Heart right ventricle (tissue), 16 donors: ENCODE measurements at regions of chr19 and their contacts with region 1.

Region 1: GRCh38 chr19:3163230-3163886 is 15.2 kb upstream of the S1PR4 start:
- DNase-seq: peak; percentile 54 to 69
- ATAC-seq: peak; percentile 83 to 90 (median 88)
- H3K4me3 ChIP-seq: no peak overlapping the region
- H3K27ac ChIP-seq: peak overlapping the region in 1 of 10 donors; percentile 87
- H3K4me1 ChIP-seq: peaks cover 0 to 46% (median 7%) of the 10 kb centered on the region in 9 donors
- H3K27me3 ChIP-seq: no peaks in the 10 kb centered on the region
- CTCF ChIP-seq: peak; percentile 34 to 98 (median 95)

Region 2: GRCh38 chr19:2887391-2887914 is 275.9 kb before region 1 on chr19:
- intact Hi-C with region 1: loop called in 5 of 10 experiments (anchors 5 to 10 kb)
- DNase-seq: no peak
- ATAC-seq: peak; percentile 34 to 78 (median 71)
- H3K4me3 ChIP-seq: no peak overlapping the region
- H3K27ac ChIP-seq: peak overlapping the region in 1 of 10 donors; percentile 12
- H3K4me1 ChIP-seq: peaks cover 0 to 10% (median 4%) of the 10 kb centered on the region in 9 donors
- H3K27me3 ChIP-seq: peaks cover 0 to 3% (median 0%) of the 10 kb centered on the region in 7 donors
- CTCF ChIP-seq: peak; percentile 50 to 76 (median 70)

Region 3: GRCh38 chr19:2950286-2951124 is 212.9 kb before region 1 on chr19:
- intact Hi-C with region 1: loop called in 5 of 10 experiments (anchors 1 to 5 kb)
- DNase-seq: peak; percentile 100
- ATAC-seq: peak; percentile 94 to 98 (median 96)
- H3K4me3 ChIP-seq: peak overlapping the region; percentile 68 to 97 (median 80)
- H3K27ac ChIP-seq: peak overlapping the region; percentile 90 to 99 (median 95)
- H3K4me1 ChIP-seq: peaks cover 7 to 35% (median 19%) of the 10 kb centered on the region in 9 donors
- H3K27me3 ChIP-seq: no peaks in the 10 kb centered on the region
- CTCF ChIP-seq: no peak

Region 4: DNA sequence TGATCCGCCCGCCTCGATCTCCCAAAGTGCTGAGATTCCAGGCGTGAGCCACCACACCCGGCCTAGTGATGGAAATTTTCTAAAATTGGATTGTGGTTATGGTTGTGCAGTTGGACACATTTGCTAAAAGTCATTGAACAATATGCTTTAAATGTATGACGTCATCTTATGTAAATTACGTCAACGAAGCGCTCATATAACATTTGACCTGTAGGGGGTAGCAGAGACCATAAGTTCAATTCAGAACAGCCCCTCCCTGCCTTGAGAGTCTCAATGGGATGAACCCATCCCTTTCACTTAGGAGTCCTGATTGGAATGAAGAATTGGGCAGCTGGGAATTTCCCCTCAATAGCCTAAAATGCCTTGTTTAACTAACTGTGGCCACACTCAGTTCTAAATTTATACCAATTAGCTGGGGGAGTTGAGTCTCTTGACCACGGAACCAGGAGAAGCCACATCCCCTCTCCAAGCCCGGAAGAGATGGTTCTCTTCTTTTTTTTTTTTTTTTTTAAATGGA is 201.3 kb before region 1 on chr19:
- intact Hi-C with region 1: loop called in 8 of 10 experiments (anchors 1 to 5 kb)
- DNase-seq: peak in 1 of 2 donors; percentile 65
- ATAC-seq: peak; percentile 65 to 93 (median 81)
- H3K4me3 ChIP-seq: peak overlapping the region in 2 of 10 donors; percentile 27 to 34
- H3K27ac ChIP-seq: no peak overlapping the region
- H3K4me1 ChIP-seq: peaks cover 0 to 8% (median 3%) of the 10 kb centered on the region in 9 donors
- H3K27me3 ChIP-seq: no peaks in the 10 kb centered on the region
- CTCF ChIP-seq: peak; percentile 60 to 87 (median 79)

Region 5: GRCh38 chr19:3075895-3076431 is 87.4 kb before region 1 on chr19:
- intact Hi-C with region 1: loop called in 5 of 10 experiments (anchors 5 to 10 kb)
- DNase-seq: peak in 1 of 2 donors; percentile 70
- ATAC-seq: peak; percentile 44 to 82 (median 72)
- H3K4me3 ChIP-seq: peak overlapping the region in 1 of 10 donors; percentile 25
- H3K27ac ChIP-seq: no peak overlapping the region
- H3K4me1 ChIP-seq: peaks cover 0 to 17% (median 8%) of the 10 kb centered on the region in 9 donors
- H3K27me3 ChIP-seq: no peaks in the 10 kb centered on the region
- CTCF ChIP-seq: peak; percentile 86 to 95 (median 90)

Region 6: GRCh38 chr19:3125900-3126524 is 37.3 kb before region 1 on chr19:
- intact Hi-C with region 1: loop called in 8 of 10 experiments (anchors 1 to 5 kb)
- DNase-seq: peak; percentile 58 to 75
- ATAC-seq: peak; percentile 17 to 76 (median 62)
- H3K4me3 ChIP-seq: no peak overlapping the region
- H3K27ac ChIP-seq: no peak overlapping the region
- H3K4me1 ChIP-seq: peaks cover 0 to 11% (median 0%) of the 10 kb centered on the region in 9 donors
- H3K27me3 ChIP-seq: no peaks in the 10 kb centered on the region
- CTCF ChIP-seq: peak; percentile 46 to 81 (median 74)

Region 7: GRCh38 chr19:3131168-3131567 is 32.2 kb before region 1 on chr19:
- intact Hi-C with region 1: loop called in 8 of 10 experiments (anchors 1 to 5 kb)
- DNase-seq: no peak
- ATAC-seq: no peak
- H3K4me3 ChIP-seq: no peak overlapping the region
- H3K27ac ChIP-seq: no peak overlapping the region
- H3K4me1 ChIP-seq: peaks cover 0 to 28% (median 0%) of the 10 kb centered on the region in 9 donors
- H3K27me3 ChIP-seq: no peaks in the 10 kb centered on the region
- CTCF ChIP-seq: no peak

Region 8: DNA sequence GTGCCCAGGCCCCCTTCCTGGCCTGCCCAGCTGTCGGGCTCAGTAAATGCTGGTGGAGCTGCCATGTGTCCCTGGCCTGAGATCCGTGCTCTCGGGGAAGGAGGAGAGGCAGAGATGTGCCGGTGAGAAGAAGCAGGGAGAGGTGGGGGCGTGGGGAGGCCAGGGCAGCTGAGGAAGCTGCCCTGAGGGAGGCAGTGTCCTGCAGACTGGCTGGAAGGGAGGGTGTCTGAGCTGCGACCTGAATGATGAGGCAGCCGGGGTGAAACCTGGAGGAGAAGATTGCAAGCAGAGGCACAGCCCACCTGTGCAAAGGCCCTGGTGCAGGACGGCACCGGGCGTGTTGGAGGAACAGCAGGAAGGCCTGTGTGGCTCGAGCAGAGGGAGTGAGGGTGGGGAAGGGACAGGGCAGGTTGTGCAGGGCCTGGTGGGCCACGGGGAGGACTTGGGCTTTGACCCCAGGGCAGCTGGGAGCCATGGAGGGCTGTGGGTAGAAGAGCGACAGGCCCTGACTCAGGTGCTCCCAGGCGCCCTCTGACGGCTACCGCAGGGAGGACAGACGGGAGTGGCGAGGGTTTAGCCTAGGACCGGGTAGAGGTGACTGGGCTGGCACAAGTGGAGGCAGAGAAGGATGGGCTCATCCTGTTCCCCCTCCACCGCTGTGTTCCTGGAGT is 47.1 kb after region 1 on chr19:
- intact Hi-C with region 1: no loop called
- DNase-seq: peak in 1 of 2 donors; percentile 62
- ATAC-seq: peak in 7 of 8 donors; percentile 39 to 68 (median 54)
- H3K4me3 ChIP-seq: no peak overlapping the region
- H3K27ac ChIP-seq: no peak overlapping the region
- H3K4me1 ChIP-seq: no peaks in the 10 kb centered on the region
- H3K27me3 ChIP-seq: no peaks in the 10 kb centered on the region
- CTCF ChIP-seq: peak; percentile 8 to 75 (median 55)